ENCODE measurements at regions of chr15 and their contacts with region 1.

Region 1: DNA sequence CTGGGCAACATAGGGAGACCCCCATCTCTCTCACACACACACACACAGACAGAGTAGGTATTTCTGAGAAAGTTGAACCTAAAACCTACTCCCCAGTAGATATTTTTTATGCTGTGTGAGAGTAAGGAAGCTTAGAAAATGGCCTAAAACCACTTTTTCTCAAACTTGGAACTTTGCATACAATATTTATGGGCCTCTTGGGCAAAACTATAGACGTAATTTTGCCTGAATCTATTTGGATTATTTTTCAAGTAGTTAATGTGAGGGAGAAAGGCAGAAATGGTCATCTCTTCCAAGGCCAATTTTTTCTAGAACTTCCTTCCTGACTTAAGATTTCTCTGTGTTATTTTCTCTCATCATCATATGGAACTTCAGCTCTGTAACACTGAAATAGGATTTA is 81.7 kb downstream of the ZNF609 start:
- DNase-seq: no peak
- H3K4me3 ChIP-seq: no peak overlapping the region
- H3K27ac ChIP-seq: no peak overlapping the region
- H3K4me1 ChIP-seq: no peaks in the 10 kb centered on the region
- H3K27me3 ChIP-seq: no peaks in the 10 kb centered on the region
- CTCF ChIP-seq: no peak
- POLR2A ChIP-seq: no peak

Region 2: GRCh38 chr15:64478863-64479262 is 63.2 kb before region 1 on chr15:
- CTCF ChIA-PET with region 1: no interaction called
- POLR2A ChIA-PET with region 1: interaction called, 11 read pairs
- dilution Hi-C with region 1: no loop called
- intact Hi-C with region 1: no loop called
- DNase-seq: no peak
- H3K4me3 ChIP-seq: no peak overlapping the region
- H3K27ac ChIP-seq: no peak overlapping the region
- H3K4me1 ChIP-seq: no peaks in the 10 kb centered on the region
- H3K27me3 ChIP-seq: no peaks in the 10 kb centered on the region
- CTCF ChIP-seq: no peak
- POLR2A ChIP-seq: no peak

Region 3: GRCh38 chr15:64552281-64552948 is 10.3 kb after region 1 on chr15:
- CTCF ChIA-PET with region 1: no interaction called
- POLR2A ChIA-PET with region 1: no interaction called
- dilution Hi-C with region 1: no loop called
- intact Hi-C with region 1: no loop called
- DNase-seq: no peak
- H3K4me3 ChIP-seq: no peak overlapping the region
- H3K27ac ChIP-seq: no peak overlapping the region
- H3K4me1 ChIP-seq: no peaks in the 10 kb centered on the region
- H3K27me3 ChIP-seq: no peaks in the 10 kb centered on the region
- CTCF ChIP-seq: no peak
- POLR2A ChIP-seq: no peak